ENCODE measurements at regions of chr9 and their contacts with region 1.

Region 1: DNA sequence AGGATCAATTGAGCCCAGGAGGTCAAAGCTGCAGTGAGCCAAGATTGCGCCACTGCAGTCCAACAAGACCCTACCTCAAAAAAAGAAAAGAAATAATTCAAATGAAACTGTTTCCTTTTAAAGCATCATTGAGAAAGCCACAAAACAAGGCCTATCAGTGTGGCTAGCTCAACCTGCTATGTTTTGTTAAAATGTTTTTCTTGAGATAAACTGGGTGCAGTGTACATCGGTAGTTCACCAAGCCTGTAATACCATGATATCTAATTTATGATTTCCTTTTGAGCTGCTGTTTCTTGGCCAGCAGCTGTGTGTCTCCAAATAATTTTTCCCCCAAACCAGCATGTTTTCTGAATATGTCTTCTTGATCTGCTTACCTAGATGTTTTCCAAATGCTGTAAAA is 97.3 kb upstream of the GOLGA1 start:
- DNase-seq: no peak
- ATAC-seq: no peak
- H3K4me3 ChIP-seq: no peak overlapping the region
- H3K4me3 Mint-ChIP-seq: no peak overlapping the region
- H3K27ac ChIP-seq: no peak overlapping the region
- H3K27ac Mint-ChIP-seq: no peak overlapping the region
- H3K4me1 ChIP-seq: no peaks in the 10 kb centered on the region
- H3K4me1 Mint-ChIP-seq: no peaks in the 10 kb centered on the region
- H3K27me3 ChIP-seq: no peaks in the 10 kb centered on the region
- H3K27me3 Mint-ChIP-seq: no peaks in the 10 kb centered on the region
- CTCF ChIP-seq: no peak

Region 2: DNA sequence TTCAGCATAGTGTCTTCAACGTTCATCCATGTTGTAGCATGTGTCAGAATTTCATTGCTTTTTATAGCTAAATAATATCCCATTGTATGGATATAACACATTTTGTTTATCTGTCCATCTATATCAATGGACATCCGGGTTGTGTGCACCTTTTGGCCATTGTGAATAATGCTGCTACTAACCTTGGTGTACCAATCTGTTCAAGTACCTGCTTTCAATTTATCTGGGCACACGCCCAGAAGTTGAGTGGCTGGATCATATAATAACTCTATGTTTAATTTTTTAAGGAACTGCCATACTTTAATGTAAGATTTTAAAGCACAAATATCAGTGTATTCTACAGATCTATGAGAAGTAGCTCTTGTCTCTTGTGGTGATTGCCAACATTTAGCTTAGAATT is 61.6 kb after region 1 on chr9:
- CTCF ChIA-PET with region 1: no interaction called
- POLR2A ChIA-PET with region 1: no interaction called
- intact Hi-C with region 1: loop called (anchors 10 kb)
- DNase-seq: no peak
- ATAC-seq: no peak
- H3K4me3 ChIP-seq: no peak overlapping the region
- H3K4me3 Mint-ChIP-seq: no peak overlapping the region
- H3K27ac ChIP-seq: no peak overlapping the region
- H3K27ac Mint-ChIP-seq: no peak overlapping the region
- H3K4me1 ChIP-seq: no peaks in the 10 kb centered on the region
- H3K4me1 Mint-ChIP-seq: no peaks in the 10 kb centered on the region
- H3K27me3 ChIP-seq: no peaks in the 10 kb centered on the region
- H3K27me3 Mint-ChIP-seq: no peaks in the 10 kb centered on the region
- CTCF ChIP-seq: no peak

Region 3: DNA sequence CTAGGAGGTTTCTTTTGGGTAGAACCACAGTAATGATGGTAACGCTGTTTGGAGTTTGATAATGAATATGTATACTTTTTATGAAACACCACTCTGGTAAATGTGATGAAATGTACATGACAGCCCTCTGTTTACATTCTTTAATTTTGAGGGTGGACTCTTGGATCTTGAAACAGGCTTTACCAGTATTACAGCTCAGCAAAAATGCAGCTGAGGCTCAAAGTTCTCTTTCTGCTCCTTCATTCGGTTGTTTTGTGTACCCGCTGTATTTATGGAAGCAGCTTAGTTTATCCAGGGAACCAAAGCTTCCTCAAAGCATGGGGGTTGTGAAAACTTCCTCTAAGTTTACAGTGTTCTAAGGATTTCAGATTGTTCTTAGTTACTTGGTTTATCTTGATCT is 234.5 kb after region 1 on chr9:
- CTCF ChIA-PET with region 1: no interaction called
- POLR2A ChIA-PET with region 1: no interaction called
- intact Hi-C with region 1: no loop called
- DNase-seq: no peak
- ATAC-seq: no peak
- H3K4me3 ChIP-seq: no peak overlapping the region
- H3K4me3 Mint-ChIP-seq: no peak overlapping the region
- H3K27ac ChIP-seq: no peak overlapping the region
- H3K27ac Mint-ChIP-seq: no peak overlapping the region
- H3K4me1 ChIP-seq: peaks cover 0 to 5% of the 10 kb centered on the region in 2 donors
- H3K4me1 Mint-ChIP-seq: peaks cover 22% of the 10 kb centered on the region
- H3K27me3 ChIP-seq: no peaks in the 10 kb centered on the region
- H3K27me3 Mint-ChIP-seq: no peaks in the 10 kb centered on the region
- CTCF ChIP-seq: no peak

Measured in B cell (primary cell).